Activated CD4-positive, alpha-beta memory T cell treated with anti-CD3 and anti-CD28 coated beads for 36 hours (primary cell): ENCODE measurements at regions of chr11 and their contacts with region 1.

Region 1: DNA sequence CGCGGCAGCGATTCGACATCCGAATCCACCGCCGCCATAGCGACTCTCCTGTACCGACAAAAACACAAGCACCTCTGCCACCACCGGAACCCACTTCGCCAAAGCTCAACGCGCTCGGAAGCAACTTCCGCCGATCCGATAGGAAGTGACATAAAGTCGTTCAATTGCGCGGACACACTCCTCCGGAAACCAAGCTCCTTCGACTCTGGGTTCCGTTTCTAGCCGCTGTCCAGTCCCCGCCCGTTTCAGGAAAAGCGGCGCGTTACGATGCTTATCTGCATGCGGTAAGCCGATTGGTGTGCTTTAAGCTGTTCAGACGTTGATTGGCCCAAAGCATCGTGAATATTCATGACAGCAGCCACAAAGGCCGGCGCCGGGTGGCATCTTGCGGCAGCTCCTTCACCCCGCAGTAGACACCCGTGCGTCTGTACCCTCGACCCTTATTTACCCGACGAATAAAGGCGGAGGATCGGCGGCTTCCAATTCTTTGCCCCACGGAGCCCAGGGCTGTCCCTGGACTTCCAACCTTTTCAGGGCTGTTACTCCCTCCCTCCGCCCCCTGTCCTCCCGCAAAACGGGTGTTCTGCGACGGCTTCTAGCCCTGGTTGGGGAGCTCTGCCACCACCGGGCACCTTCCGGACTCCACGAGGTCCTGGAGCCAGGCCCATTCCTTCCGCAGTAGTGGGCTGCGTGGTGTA is at the start of gene TUT1:
- DNase-seq: peak; percentile 99
- H3K4me3 Mint-ChIP-seq: peak within 1 kb of the TSS; percentile 100
- H3K27ac Mint-ChIP-seq: peak within 1 kb of the TSS; percentile 97
- H3K4me1 Mint-ChIP-seq: peaks cover 52% of the 10 kb centered on the region
- H3K27me3 Mint-ChIP-seq: no peaks in the 10 kb centered on the region
- total RNA-seq, gene TUT1: 32.7 to 34.2 TPM

Region 2: DNA sequence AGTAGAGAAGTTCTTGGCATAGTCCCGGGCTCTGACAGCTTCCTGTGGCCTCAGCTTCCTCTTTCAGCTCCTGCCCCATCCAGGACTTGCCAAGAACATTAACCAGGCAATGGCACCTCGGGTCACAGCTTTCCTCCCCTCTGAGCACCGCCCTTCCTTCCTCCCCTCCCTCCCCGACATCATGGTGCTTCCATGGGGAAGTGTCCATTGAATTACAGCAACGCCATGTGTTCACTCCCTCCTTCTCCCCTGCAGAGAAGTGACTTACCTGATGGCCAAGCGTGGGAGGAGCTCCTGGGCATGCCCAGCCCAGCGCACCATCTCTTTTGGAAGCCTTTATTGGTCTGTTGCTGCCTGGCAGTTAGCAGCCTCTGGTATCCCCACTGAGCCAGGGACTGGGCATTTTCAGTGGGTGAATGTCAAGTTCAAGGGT is 937.2 kb before region 1 on chr11:
- CTCF ChIA-PET with region 1: no interaction called
- POLR2A ChIA-PET with region 1: no interaction called
- intact Hi-C with region 1: no loop called
- DNase-seq: no peak
- H3K4me3 Mint-ChIP-seq: no peak overlapping the region
- H3K27ac Mint-ChIP-seq: no peak overlapping the region
- H3K4me1 Mint-ChIP-seq: no peaks in the 10 kb centered on the region
- H3K27me3 Mint-ChIP-seq: peaks cover 16% of the 10 kb centered on the region

Region 3: GRCh38 chr11:62542750-62543567 is 48.6 kb before region 1 on chr11:
- CTCF ChIA-PET with region 1: interaction called, 21 read pairs
- POLR2A ChIA-PET with region 1: interaction called, 14 read pairs
- intact Hi-C with region 1: no loop called
- DNase-seq: peak; percentile 88
- H3K4me3 Mint-ChIP-seq: peak overlapping the region; percentile 93
- H3K27ac Mint-ChIP-seq: peak overlapping the region; percentile 83
- H3K4me1 Mint-ChIP-seq: peaks cover 75% of the 10 kb centered on the region
- H3K27me3 Mint-ChIP-seq: no peaks in the 10 kb centered on the region

Region 4: GRCh38 chr11:62612366-62613290 is 21.0 kb after region 1 on chr11 and contains the starts of genes EML3 and ROM1:
- CTCF ChIA-PET with region 1: interaction called, 31 read pairs
- POLR2A ChIA-PET with region 1: interaction called, 17 read pairs
- intact Hi-C with region 1: no loop called
- DNase-seq: peak; percentile 90
- H3K4me3 Mint-ChIP-seq: peak within 1 kb of the TSS; percentile 90
- H3K27ac Mint-ChIP-seq: peak within 1 kb of the TSS; percentile 95
- H3K4me1 Mint-ChIP-seq: peaks cover 45% of the 10 kb centered on the region
- H3K27me3 Mint-ChIP-seq: no peaks in the 10 kb centered on the region
- total RNA-seq, gene EML3: 113 to 116 TPM
- total RNA-seq, gene ROM1: 1.1 to 1.5 TPM

Region 5: DNA sequence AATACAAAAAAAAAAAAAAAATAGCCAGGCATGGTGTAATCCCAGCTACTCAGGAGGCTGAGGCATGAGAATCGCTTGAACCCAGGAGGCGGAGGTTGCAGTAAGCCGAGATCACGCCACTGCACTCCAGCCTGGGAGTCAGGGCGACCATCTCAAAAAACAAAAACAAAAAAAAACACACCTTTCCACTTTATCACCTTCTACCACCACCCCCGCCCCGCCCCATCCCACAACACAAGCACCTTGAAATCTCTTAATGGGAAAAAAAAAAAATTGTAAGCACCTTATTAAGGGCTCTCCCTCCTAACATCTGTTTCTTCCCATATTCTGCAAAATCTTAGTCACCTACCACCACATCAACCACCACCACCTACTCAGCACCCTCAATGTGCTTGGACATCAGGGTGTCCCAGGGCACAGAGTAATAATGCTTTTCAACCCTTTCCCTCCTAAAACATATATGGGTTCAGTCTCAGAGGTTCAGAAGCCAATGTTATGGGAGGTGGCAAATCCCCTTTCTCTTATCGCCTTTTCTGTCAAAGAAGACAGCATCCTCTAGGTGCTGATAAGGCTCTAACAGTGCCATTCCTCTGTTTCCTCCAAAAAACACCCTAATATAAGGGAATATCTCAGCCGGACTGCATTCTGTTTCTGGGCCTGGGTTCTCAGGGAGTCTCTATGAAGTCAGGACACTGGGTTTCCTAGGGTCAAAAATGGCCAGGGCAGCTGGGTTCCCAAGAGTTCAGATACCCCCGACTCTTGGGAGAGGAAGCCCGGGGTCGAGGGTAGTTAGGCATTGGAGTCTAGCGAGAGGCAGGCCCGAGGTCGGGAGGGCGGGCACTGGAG is 60.8 kb after region 1 on chr11:
- CTCF ChIA-PET with region 1: interaction called, 6 read pairs
- POLR2A ChIA-PET with region 1: interaction called, 24 read pairs
- intact Hi-C with region 1: loop called (anchors 2 kb)
- DNase-seq: peak; percentile 59
- H3K4me3 Mint-ChIP-seq: peak overlapping the region; percentile 85
- H3K27ac Mint-ChIP-seq: peak overlapping the region; percentile 81
- H3K4me1 Mint-ChIP-seq: peaks cover 22% of the 10 kb centered on the region
- H3K27me3 Mint-ChIP-seq: no peaks in the 10 kb centered on the region

Region 6: GRCh38 chr11:62678770-62679696 is 87.4 kb after region 1 on chr11 and contains the start of gene UBXN1:
- CTCF ChIA-PET with region 1: interaction called, 14 read pairs
- POLR2A ChIA-PET with region 1: no interaction called
- intact Hi-C with region 1: no loop called
- DNase-seq: peak; percentile 94
- H3K4me3 Mint-ChIP-seq: peak within 1 kb of the TSS; percentile 86
- H3K27ac Mint-ChIP-seq: peak within 1 kb of the TSS; percentile 90
- H3K4me1 Mint-ChIP-seq: peaks cover 35% of the 10 kb centered on the region
- H3K27me3 Mint-ChIP-seq: no peaks in the 10 kb centered on the region
- total RNA-seq, gene UBXN1: 110 to 116 TPM

Region 7: DNA sequence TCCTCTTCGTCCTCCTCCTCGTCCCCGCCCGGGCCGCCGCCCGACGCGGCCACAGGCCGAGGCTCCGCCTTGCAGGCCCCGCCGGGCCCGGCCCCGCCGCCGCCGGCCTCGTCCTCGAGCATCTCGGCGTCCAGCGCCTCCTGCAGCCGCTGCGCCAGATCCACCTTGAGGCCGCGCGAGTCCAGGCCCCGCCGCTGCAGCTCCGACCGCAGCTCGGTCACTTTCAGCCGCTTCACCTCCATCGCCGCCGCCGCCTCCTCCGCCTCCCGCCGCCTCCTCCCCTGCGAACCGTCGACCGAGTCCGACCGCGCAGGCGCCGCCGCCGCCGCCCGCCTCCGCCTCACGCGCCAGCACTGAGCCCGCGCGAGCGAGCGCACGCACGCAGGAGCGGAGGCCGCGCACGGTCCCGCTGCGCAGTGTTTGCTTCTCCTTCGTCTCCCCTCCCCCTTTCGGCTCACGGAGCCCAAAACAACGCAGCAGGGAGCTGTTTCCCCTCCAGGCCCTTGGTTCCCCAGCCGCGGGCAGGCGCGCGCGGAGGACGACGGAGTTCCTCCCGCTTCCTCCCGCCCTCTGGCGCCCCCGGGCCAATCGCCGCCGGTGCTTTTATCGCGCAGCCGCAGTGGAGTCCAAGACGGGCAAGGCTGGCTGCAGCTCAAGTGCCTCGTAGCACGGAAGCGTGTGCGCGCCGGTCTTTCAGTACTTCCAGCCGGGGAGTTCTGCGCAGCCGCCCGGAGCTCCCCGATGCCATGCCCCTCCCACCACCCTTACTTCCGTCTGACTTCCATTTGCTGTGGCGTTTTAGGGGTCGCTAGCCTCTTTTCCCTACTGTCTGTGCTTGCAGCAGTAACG is 135.5 kb after region 1 on chr11 and contains the start of gene HNRNPUL2:
- CTCF ChIA-PET with region 1: interaction called, 4 read pairs
- POLR2A ChIA-PET with region 1: interaction called, 11 read pairs
- intact Hi-C with region 1: no loop called
- DNase-seq: peak; percentile 99
- H3K4me3 Mint-ChIP-seq: peak within 1 kb of the TSS; percentile 99
- H3K27ac Mint-ChIP-seq: peak within 1 kb of the TSS; percentile 93
- H3K4me1 Mint-ChIP-seq: peaks cover 44% of the 10 kb centered on the region
- H3K27me3 Mint-ChIP-seq: no peaks in the 10 kb centered on the region
- total RNA-seq, gene HNRNPUL2: 56.0 to 62.3 TPM

Region 8: GRCh38 chr11:62841361-62842184 is 250.0 kb after region 1 on chr11:
- CTCF ChIA-PET with region 1: no interaction called
- POLR2A ChIA-PET with region 1: interaction called, 13 read pairs
- intact Hi-C with region 1: no loop called
- DNase-seq: peak; percentile 88
- H3K4me3 Mint-ChIP-seq: no peak overlapping the region
- H3K27ac Mint-ChIP-seq: no peak overlapping the region
- H3K4me1 Mint-ChIP-seq: peaks cover 17% of the 10 kb centered on the region
- H3K27me3 Mint-ChIP-seq: no peaks in the 10 kb centered on the region